ENCODE measurements at regions of chr22 and their contacts with region 1.

Region 1: GRCh38 chr22:41946629-41947423 is at the start of gene CENPM:
- DNase-seq: peak; percentile 93
- ATAC-seq: peak; percentile 98
- total RNA-seq, gene CENPM: 0.52 TPM

Region 2: DNA sequence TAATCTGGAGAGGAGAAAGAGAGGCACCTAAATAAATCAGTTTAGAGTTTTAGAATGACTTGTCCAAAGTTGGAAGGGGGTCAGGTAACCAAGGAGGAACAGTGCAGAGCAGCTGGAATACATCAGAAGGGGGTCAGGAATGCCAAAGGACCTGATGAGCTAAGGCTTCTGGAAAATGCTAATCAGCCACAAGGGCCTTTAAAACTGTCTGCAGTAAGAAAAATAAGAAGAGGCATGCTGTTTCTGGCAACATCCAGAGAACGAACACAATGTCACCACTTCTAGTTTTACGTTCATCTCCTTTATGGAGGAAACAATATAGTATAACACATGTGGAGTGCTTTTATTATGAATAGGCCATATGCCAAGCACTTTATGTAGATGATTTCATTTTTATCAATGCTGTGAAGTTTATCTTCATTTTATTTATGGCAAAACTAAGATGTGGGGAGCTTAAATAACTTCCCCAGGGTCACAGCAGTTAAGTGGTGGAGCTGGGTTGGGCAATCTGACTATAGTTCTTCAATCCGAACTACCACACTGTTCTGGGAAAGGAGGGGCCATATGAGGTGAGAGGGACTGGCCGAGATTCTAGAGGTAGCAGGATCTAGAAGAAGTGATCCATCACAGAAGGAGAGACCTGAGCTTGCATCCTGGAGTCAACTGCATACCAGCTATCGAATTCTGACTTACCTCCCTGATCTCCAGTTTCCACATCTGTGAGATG is 455.3 kb before region 1 on chr22:
- intact Hi-C with region 1: no loop called
- DNase-seq: no peak
- ATAC-seq: peak; percentile 27

Region 3: DNA sequence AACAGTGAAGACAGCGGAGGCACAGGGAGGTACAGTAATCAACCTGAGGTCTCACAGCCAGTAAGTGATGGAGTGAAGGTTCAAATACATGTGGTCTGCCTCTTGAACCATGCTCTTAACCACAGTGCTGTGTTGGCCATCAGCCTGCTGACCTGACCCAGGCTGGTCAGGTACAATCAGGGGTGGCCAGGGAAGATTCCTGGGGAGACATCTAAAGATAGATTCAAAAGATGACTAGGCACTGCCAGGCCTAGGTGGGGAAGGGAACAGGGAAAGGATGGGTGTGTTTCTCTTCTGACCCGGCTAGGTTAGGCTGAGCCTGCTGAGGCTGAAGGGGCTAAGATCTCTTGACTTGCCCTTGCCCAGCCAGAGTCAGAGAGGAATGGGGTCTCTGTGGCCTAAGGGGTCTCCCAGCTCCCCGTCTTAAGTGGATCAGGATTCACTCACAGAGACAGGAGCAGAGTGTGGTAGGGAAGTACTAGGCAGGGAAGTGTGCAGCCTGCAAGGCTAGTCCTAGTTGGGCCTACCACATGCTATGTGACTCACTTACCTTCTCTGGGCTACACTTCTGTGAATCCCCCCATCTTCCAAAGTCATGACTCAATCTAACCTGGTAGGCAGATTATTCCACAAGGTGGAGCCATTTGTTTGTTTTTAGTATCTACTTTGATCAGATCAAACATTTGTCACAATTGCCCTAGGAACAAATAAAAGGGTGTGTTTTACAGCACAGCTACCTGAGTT is 124.3 kb before region 1 on chr22:
- intact Hi-C with region 1: loop called (anchors 5 kb)
- DNase-seq: no peak
- ATAC-seq: no peak

Region 4: DNA sequence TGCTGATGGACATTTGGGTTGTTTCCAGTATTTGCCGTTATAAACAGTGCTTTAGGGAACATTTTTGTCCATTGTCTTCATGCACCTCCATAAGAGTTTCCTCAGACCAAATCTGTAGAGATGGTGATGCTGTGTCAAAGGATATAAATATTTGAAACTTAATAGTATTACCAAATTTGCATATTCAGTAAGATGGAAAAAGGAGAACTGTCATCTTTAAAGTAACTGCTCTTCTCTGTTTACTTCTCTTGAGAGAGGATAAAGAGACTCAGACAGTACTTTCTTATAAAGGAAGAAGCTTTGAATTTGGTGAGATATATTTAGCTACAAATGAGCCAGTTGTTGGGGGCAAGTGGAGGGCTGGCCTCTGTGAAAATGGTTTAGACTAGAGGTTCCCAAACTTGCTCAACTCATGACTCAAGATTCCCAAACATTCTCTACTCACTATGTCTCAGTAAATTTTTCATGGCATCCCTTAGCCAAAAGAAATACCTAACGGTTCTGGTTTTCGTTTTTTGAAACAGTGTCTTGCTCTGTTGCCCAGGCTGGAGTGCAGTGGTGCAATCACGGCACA is 58.1 kb before region 1 on chr22:
- intact Hi-C with region 1: no loop called
- DNase-seq: no peak
- ATAC-seq: no peak

Measured in left ventricle myocardium superior (tissue), 1 donor.